Naive thymus-derived CD4-positive, alpha-beta T cell (primary cell): ENCODE measurements at regions of chr5 and their contacts with region 1.

Region 1: GRCh38 chr5:112160652-112161391 is 258.3 kb downstream of the EPB41L4A start:
- DNase-seq: peak; percentile 85 to 96 (median 91)
- ATAC-seq: peak; percentile 100
- H3K4me3 ChIP-seq: peak overlapping the region; percentile 73
- H3K4me3 Mint-ChIP-seq: peak overlapping the region; percentile 81 to 96 (median 94)
- H3K27ac ChIP-seq: peak overlapping the region; percentile 80
- H3K27ac Mint-ChIP-seq: peak overlapping the region; percentile 60 to 95 (median 89)
- H3K4me1 ChIP-seq: peaks cover 10 to 16% of the 10 kb centered on the region in 2 donors
- H3K4me1 Mint-ChIP-seq: peaks cover 18 to 41% (median 31%) of the 10 kb centered on the region in 7 donors
- H3K27me3 ChIP-seq: no peaks in the 10 kb centered on the region
- H3K27me3 Mint-ChIP-seq: no peaks in the 10 kb centered on the region

Region 2: GRCh38 chr5:110757118-110757729 is 1403.6 kb before region 1 on chr5:
- CTCF ChIA-PET with region 1: no interaction called
- POLR2A ChIA-PET with region 1: no interaction called
- intact Hi-C with region 1: loop called (anchors 5 kb)
- DNase-seq: peak in 5 of 9 donors; percentile 21 to 45 (median 33)
- ATAC-seq: peak; percentile 45
- H3K4me3 ChIP-seq: no peak overlapping the region
- H3K4me3 Mint-ChIP-seq: no peak overlapping the region
- H3K27ac ChIP-seq: no peak overlapping the region
- H3K27ac Mint-ChIP-seq: no peak overlapping the region
- H3K4me1 ChIP-seq: peaks cover 0 to 4% of the 10 kb centered on the region in 2 donors
- H3K4me1 Mint-ChIP-seq: peaks cover 7 to 30% (median 11%) of the 10 kb centered on the region in 7 donors
- H3K27me3 ChIP-seq: no peaks in the 10 kb centered on the region
- H3K27me3 Mint-ChIP-seq: no peaks in the 10 kb centered on the region

Region 3: GRCh38 chr5:111530298-111530740 is 630.5 kb before region 1 on chr5:
- CTCF ChIA-PET with region 1: no interaction called
- POLR2A ChIA-PET with region 1: interaction called, 3 read pairs
- intact Hi-C with region 1: loop called in 1 of 2 experiments (anchors 1 kb)
- DNase-seq: peak; percentile 51 to 94 (median 78)
- ATAC-seq: peak; percentile 100
- H3K4me3 ChIP-seq: peak overlapping the region; percentile 6
- H3K4me3 Mint-ChIP-seq: peak overlapping the region; percentile 1 to 78 (median 66)
- H3K27ac ChIP-seq: peak overlapping the region; percentile 34
- H3K27ac Mint-ChIP-seq: peak overlapping the region; percentile 6 to 90 (median 76)
- H3K4me1 ChIP-seq: peaks cover 9 to 13% of the 10 kb centered on the region in 2 donors
- H3K4me1 Mint-ChIP-seq: peaks cover 10 to 28% (median 14%) of the 10 kb centered on the region in 7 donors
- H3K27me3 ChIP-seq: no peaks in the 10 kb centered on the region
- H3K27me3 Mint-ChIP-seq: peaks cover 0 to 3% (median 0%) of the 10 kb centered on the region in 5 donors

Region 4: GRCh38 chr5:111853748-111854147 is 307.1 kb before region 1 on chr5:
- CTCF ChIA-PET with region 1: no interaction called
- POLR2A ChIA-PET with region 1: no interaction called
- intact Hi-C with region 1: no loop called
- DNase-seq: no peak
- ATAC-seq: no peak
- H3K4me3 ChIP-seq: no peak overlapping the region
- H3K4me3 Mint-ChIP-seq: no peak overlapping the region
- H3K27ac ChIP-seq: no peak overlapping the region
- H3K27ac Mint-ChIP-seq: no peak overlapping the region
- H3K4me1 ChIP-seq: no peaks in the 10 kb centered on the region
- H3K4me1 Mint-ChIP-seq: no peaks in the 10 kb centered on the region
- H3K27me3 ChIP-seq: no peaks in the 10 kb centered on the region
- H3K27me3 Mint-ChIP-seq: peaks cover 5 to 18% (median 7%) of the 10 kb centered on the region in 5 donors

Region 5: GRCh38 chr5:112186401-112186990 is 25.7 kb after region 1 on chr5:
- CTCF ChIA-PET with region 1: no interaction called
- POLR2A ChIA-PET with region 1: no interaction called
- intact Hi-C with region 1: loop called in 1 of 2 experiments (anchors 1 kb)
- DNase-seq: peak in 3 of 9 donors; percentile 1 to 16 (median 5)
- ATAC-seq: peak; percentile 61
- H3K4me3 ChIP-seq: no peak overlapping the region
- H3K4me3 Mint-ChIP-seq: no peak overlapping the region
- H3K27ac ChIP-seq: no peak overlapping the region
- H3K27ac Mint-ChIP-seq: no peak overlapping the region
- H3K4me1 ChIP-seq: no peaks in the 10 kb centered on the region
- H3K4me1 Mint-ChIP-seq: no peaks in the 10 kb centered on the region
- H3K27me3 ChIP-seq: no peaks in the 10 kb centered on the region
- H3K27me3 Mint-ChIP-seq: peaks cover 27 to 61% (median 43%) of the 10 kb centered on the region in 5 donors

Region 6: DNA sequence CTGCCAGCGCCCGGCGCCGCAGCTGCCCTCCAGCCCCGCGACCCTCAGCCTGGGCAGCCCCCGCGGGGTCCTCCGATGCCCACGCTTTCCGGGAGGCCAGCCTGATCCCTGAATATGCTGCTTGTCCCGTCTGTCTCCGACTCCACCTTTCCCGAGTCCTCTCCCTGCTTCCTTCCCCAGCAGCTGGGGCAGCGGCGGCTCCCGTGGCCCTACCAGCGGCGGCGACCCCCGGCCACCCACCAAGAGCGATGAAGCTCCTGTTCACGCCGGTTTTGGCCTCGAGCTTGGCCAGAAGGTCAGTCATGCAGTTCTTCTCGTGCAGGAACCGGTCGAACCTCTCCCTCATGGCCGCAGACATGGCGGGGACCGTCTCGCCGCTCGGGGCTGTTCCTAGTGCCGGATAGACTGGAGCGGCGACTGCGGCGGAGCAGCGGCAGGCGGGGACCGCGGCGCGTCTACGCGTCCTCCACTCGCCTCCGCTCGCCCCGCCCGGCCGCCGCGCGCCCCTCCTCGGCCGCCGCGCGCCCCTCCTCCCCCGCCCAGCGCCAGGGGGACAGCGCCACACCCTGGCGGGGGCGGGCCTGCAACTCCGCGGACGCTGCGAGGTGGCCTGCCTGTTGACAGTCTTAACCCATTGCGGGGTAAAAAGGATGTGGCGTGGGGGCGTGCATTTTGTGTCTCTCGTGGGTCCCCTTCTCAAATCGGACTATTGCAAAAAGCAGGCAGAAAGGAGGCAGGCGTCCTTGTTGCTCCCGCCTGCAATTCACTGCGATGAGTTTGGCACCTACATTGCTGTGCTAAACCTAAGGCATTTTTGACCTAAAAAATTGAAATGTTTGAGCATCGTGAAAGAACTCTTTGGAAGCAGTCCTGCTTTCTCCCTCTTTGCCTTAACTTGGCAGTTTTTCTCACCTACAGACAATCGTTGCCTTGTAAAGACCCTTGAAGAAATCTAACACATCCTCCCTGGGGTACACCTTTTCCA is 761.3 kb after region 1 on chr5 and contains the start of gene REEP5:
- CTCF ChIA-PET with region 1: no interaction called
- POLR2A ChIA-PET with region 1: no interaction called
- intact Hi-C with region 1: loop called (anchors 2 to 10 kb)
- DNase-seq: peak; percentile 68 to 89 (median 82)
- ATAC-seq: peak; percentile 91
- H3K4me3 ChIP-seq: peak within 1 kb of the TSS; percentile 76
- H3K4me3 Mint-ChIP-seq: peak within 1 kb of the TSS; percentile 77 to 99 (median 91)
- H3K27ac ChIP-seq: peak within 1 kb of the TSS; percentile 79
- H3K27ac Mint-ChIP-seq: peak within 1 kb of the TSS; percentile 88 to 97 (median 92)
- H3K4me1 ChIP-seq: peaks cover 49 to 52% of the 10 kb centered on the region in 2 donors
- H3K4me1 Mint-ChIP-seq: peaks cover 47 to 74% (median 61%) of the 10 kb centered on the region in 7 donors
- H3K27me3 ChIP-seq: no peaks in the 10 kb centered on the region
- H3K27me3 Mint-ChIP-seq: no peaks in the 10 kb centered on the region
- total RNA-seq, gene REEP5: 16.4 to 83.9 (median 30.0) TPM

Region 7: GRCh38 chr5:113513384-113514288 is 1352.8 kb after region 1 on chr5 and contains the start of gene YTHDC2:
- CTCF ChIA-PET with region 1: no interaction called
- POLR2A ChIA-PET with region 1: no interaction called
- intact Hi-C with region 1: loop called (anchors 5 kb)
- DNase-seq: peak; percentile 79 to 89 (median 87)
- ATAC-seq: peak; percentile 97
- H3K4me3 ChIP-seq: peak within 1 kb of the TSS; percentile 85
- H3K4me3 Mint-ChIP-seq: peak within 1 kb of the TSS; percentile 86 to 98 (median 94)
- H3K27ac ChIP-seq: peak within 1 kb of the TSS; percentile 94
- H3K27ac Mint-ChIP-seq: peak within 1 kb of the TSS; percentile 86 to 98 (median 97)
- H3K4me1 ChIP-seq: peaks cover 6 to 9% of the 10 kb centered on the region in 2 donors
- H3K4me1 Mint-ChIP-seq: peaks cover 27 to 51% (median 44%) of the 10 kb centered on the region in 7 donors
- H3K27me3 ChIP-seq: no peaks in the 10 kb centered on the region
- H3K27me3 Mint-ChIP-seq: peaks cover 12 to 19% (median 13%) of the 10 kb centered on the region in 5 donors
- total RNA-seq, gene YTHDC2: 27.7 to 53.6 (median 49.2) TPM